ENCODE measurements at regions of chr3 and their contacts with region 1.

Region 1: GRCh38 chr3:116445311-116445841 is at the start of gene LSAMP:
- DNase-seq: peak; percentile 80
- H3K4me3 ChIP-seq: peak within 1 kb of the TSS; percentile 62 to 72 (median 64)
- H3K27ac ChIP-seq: peak within 1 kb of the TSS in 3 of 4 donors; percentile 65 to 82 (median 76)
- H3K4me1 ChIP-seq: peaks cover 0 to 37% (median 14%) of the 10 kb centered on the region in 4 donors
- H3K27me3 ChIP-seq: no peaks in the 10 kb centered on the region
- CTCF ChIP-seq: no peak
- EP300 ChIP-seq: no peak
- POLR2A ChIP-seq: no peak
- total RNA-seq, gene LSAMP: 22.9 to 47.1 (median 30.1) TPM

Region 2: GRCh38 chr3:115475178-115476041 is 970.0 kb before region 1 on chr3:
- intact Hi-C with region 1: no loop called
- DNase-seq: no peak
- H3K4me3 ChIP-seq: no peak overlapping the region
- H3K27ac ChIP-seq: no peak overlapping the region
- H3K4me1 ChIP-seq: no peaks in the 10 kb centered on the region
- H3K27me3 ChIP-seq: no peaks in the 10 kb centered on the region
- CTCF ChIP-seq: no peak
- EP300 ChIP-seq: no peak
- POLR2A ChIP-seq: no peak

Region 3: GRCh38 chr3:115899001-115899400 is 546.4 kb before region 1 on chr3:
- intact Hi-C with region 1: loop called (anchors 5 kb)
- DNase-seq: no peak
- H3K4me3 ChIP-seq: no peak overlapping the region
- H3K27ac ChIP-seq: no peak overlapping the region
- H3K4me1 ChIP-seq: peaks cover 0 to 34% (median 27%) of the 10 kb centered on the region in 4 donors
- H3K27me3 ChIP-seq: no peaks in the 10 kb centered on the region
- CTCF ChIP-seq: no peak
- EP300 ChIP-seq: no peak
- POLR2A ChIP-seq: no peak

Region 4: GRCh38 chr3:116246406-116246980 is 198.9 kb before region 1 on chr3:
- intact Hi-C with region 1: loop called (anchors 5 kb)
- DNase-seq: no peak
- H3K4me3 ChIP-seq: no peak overlapping the region
- H3K27ac ChIP-seq: peak overlapping the region in 3 of 4 donors; percentile 64 to 69 (median 68)
- H3K4me1 ChIP-seq: peaks cover 0 to 37% (median 21%) of the 10 kb centered on the region in 4 donors
- H3K27me3 ChIP-seq: no peaks in the 10 kb centered on the region
- CTCF ChIP-seq: no peak
- EP300 ChIP-seq: no peak
- POLR2A ChIP-seq: no peak

Region 5: GRCh38 chr3:116339441-116340028 is 105.8 kb before region 1 on chr3:
- intact Hi-C with region 1: loop called (anchors 5 kb)
- DNase-seq: peak; percentile 86
- H3K4me3 ChIP-seq: no peak overlapping the region
- H3K27ac ChIP-seq: peak overlapping the region in 3 of 4 donors; percentile 59 to 71 (median 67)
- H3K4me1 ChIP-seq: peaks cover 0 to 23% (median 13%) of the 10 kb centered on the region in 4 donors
- H3K27me3 ChIP-seq: no peaks in the 10 kb centered on the region
- CTCF ChIP-seq: no peak
- EP300 ChIP-seq: no peak
- POLR2A ChIP-seq: no peak

Region 6: GRCh38 chr3:116378077-116378476 is 67.3 kb before region 1 on chr3:
- intact Hi-C with region 1: no loop called
- DNase-seq: no peak
- H3K4me3 ChIP-seq: no peak overlapping the region
- H3K27ac ChIP-seq: no peak overlapping the region
- H3K4me1 ChIP-seq: peaks cover 0 to 18% (median 6%) of the 10 kb centered on the region in 4 donors
- H3K27me3 ChIP-seq: no peaks in the 10 kb centered on the region
- CTCF ChIP-seq: no peak
- EP300 ChIP-seq: no peak
- POLR2A ChIP-seq: no peak

Region 7: DNA sequence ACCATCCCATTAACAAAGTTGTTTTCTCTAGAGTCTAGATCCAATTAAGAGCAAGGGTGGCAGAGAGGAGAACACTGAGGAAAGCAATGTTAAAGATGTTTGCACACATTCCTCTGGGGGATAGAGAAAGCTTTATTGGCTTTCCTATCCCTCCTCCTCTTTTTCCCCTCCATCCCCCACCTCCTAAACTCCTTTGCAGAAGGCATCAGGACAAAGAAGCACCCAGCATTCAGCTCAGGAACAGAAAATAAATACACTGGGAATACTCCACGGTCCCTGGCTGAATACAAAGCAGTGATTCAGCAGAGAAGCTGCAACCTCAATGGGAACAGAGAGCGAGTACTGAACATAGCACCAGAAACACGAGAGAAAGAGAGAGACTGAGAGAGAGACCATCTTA is 22.0 kb before region 1 on chr3:
- intact Hi-C with region 1: loop called (anchors 2 kb)
- DNase-seq: no peak
- H3K4me3 ChIP-seq: peak overlapping the region in 3 of 4 donors; percentile 12 to 30 (median 22)
- H3K27ac ChIP-seq: peak overlapping the region in 3 of 4 donors; percentile 69 to 78 (median 72)
- H3K4me1 ChIP-seq: peaks cover 0 to 28% (median 27%) of the 10 kb centered on the region in 4 donors
- H3K27me3 ChIP-seq: no peaks in the 10 kb centered on the region
- CTCF ChIP-seq: no peak
- EP300 ChIP-seq: no peak
- POLR2A ChIP-seq: no peak

Region 8: DNA sequence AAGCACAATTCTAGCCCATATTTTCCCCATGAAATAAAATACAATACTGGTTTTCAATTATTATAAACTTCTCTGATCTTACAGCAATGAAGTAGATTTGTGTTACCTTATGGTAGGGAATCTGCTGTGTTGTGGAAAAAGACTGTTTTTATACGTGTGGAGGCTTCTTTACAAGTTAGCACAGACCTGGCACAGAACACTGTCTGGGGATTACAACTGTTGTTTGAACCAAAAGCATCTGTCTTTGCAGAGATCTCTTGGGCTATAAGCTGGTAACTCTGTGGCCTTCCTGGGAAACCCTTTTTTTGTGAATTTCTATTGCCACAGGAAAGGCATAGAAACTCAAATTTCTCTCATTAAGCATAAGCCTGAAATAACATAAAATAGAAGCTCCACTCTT is 846.1 kb after region 1 on chr3:
- intact Hi-C with region 1: no loop called
- DNase-seq: no peak
- H3K4me3 ChIP-seq: no peak overlapping the region
- H3K27ac ChIP-seq: no peak overlapping the region
- H3K4me1 ChIP-seq: no peaks in the 10 kb centered on the region
- H3K27me3 ChIP-seq: no peaks in the 10 kb centered on the region
- CTCF ChIP-seq: no peak
- EP300 ChIP-seq: no peak
- POLR2A ChIP-seq: no peak

Measured in sigmoid colon (tissue), 7 donors.